Transverse colon (tissue), 4 donors: ENCODE measurements at regions of chrX and their contacts with region 1.

Region 1: GRCh38 chrX:83630662-83631061 is 122.6 kb downstream of the POU3F4 start:
- DNase-seq: no peak
- H3K4me3 ChIP-seq: no peak overlapping the region
- H3K27ac ChIP-seq: no peak overlapping the region
- H3K4me1 ChIP-seq: no peaks in the 10 kb centered on the region
- H3K27me3 ChIP-seq: no peaks in the 10 kb centered on the region
- CTCF ChIP-seq: no peak
- EP300 ChIP-seq: no peak
- POLR2A ChIP-seq: no peak

Region 2: DNA sequence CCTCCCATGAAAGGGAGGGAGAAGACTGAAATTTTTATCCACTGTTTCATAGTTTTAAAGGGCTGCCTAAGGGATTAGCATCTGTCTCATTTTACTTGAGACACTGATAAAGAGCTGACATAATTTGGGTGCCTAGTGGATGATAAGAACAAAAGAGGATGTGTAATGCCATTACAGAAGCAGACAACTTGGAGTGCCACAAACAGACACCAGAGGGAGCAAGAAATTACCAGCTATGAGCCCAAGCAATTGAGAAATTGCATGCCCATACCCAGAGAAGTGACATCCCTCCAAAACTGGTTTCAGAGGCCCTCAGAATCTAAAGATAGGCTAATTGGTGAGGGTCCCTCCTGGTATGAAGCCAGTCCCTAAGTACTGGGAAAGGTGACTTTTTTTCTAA is 161.1 kb before region 1 on chrX:
- in situ Hi-C with region 1: no loop called
- intact Hi-C with region 1: loop called (anchors 5 kb)
- DNase-seq: peak; percentile 9
- H3K4me3 ChIP-seq: no peak overlapping the region
- H3K27ac ChIP-seq: no peak overlapping the region
- H3K4me1 ChIP-seq: no peaks in the 10 kb centered on the region
- H3K27me3 ChIP-seq: no peaks in the 10 kb centered on the region
- CTCF ChIP-seq: peak in 3 of 5 experiments; percentile 15 to 31 (median 25)
- EP300 ChIP-seq: no peak
- POLR2A ChIP-seq: no peak

Region 3: DNA sequence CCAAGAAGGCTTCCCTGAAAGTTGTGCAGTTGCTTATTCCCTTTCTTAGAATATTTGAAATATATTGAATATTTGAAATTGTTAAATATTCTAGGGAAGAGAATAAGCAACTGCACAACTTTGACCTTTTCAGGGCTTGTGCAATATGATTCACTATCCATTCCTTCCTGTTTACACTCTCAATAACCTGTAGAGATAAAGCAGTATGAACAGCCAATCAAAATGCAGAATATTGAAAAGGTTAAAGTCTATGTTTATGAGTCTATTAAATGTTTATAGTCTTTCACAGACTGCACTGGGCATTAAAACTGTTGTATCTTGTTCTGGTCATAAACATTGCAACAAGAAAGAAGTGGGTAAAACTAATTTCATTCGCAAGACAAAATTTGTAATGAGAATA is 108.8 kb before region 1 on chrX:
- in situ Hi-C with region 1: no loop called
- intact Hi-C with region 1: no loop called
- DNase-seq: no peak
- H3K4me3 ChIP-seq: no peak overlapping the region
- H3K27ac ChIP-seq: no peak overlapping the region
- H3K4me1 ChIP-seq: no peaks in the 10 kb centered on the region
- H3K27me3 ChIP-seq: no peaks in the 10 kb centered on the region
- CTCF ChIP-seq: no peak
- EP300 ChIP-seq: no peak
- POLR2A ChIP-seq: no peak